Activated B cell treated with CpG ODN at 0.5 μM for 24 hours (primary cell): ENCODE measurements at regions of chr3 and their contacts with region 1.

Region 1: DNA sequence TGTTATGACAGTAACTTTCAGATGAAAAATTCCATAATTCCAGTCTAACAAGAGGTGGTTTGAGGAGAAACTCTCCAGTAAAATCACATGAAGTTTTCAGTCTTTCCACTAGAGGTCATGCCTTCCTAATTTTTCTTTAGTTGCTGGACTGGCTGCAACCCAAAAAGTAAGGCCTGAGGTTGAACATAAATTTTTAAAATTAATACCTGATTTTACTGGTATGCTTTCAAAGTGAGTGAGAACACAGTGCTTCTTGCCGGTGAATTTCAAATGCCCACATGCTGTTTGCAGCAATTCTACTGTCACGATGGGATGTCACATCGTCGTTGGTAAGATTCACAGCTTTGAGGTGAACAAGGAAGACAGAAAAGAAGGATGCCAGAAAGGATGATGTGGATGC is 89.0 kb upstream of the FGF12 start:
- DNase-seq: no peak
- ATAC-seq: no peak
- H3K4me3 Mint-ChIP-seq: no peak overlapping the region
- H3K27ac Mint-ChIP-seq: no peak overlapping the region
- H3K4me1 Mint-ChIP-seq: no peaks in the 10 kb centered on the region
- H3K27me3 Mint-ChIP-seq: peaks cover 3% of the 10 kb centered on the region
- CTCF ChIP-seq: no peak

Region 2: DNA sequence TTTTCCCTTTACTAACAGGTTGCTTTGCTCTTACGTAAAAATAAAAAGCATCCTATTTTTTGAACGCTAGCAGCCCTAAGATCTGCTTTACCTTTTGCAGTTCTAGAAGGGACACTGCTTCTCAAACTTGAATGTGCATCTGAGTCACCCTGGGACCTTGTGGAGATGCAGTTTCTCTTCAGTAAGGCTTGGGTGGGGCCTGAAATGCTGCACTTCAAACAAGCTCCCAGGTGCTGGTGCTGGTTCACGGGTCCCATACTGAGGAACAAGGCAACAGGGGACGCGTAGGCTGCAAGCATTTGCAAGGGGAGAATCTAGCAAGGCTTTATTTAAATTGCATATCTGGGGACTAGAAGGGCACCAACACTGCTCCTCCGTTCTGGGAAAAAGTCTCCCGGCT is 71.3 kb after region 1 on chr3:
- CTCF ChIA-PET with region 1: no interaction called
- POLR2A ChIA-PET with region 1: no interaction called
- intact Hi-C with region 1: loop called (anchors 2 kb)
- DNase-seq: no peak
- ATAC-seq: no peak
- H3K4me3 Mint-ChIP-seq: no peak overlapping the region
- H3K27ac Mint-ChIP-seq: no peak overlapping the region
- H3K4me1 Mint-ChIP-seq: no peaks in the 10 kb centered on the region
- H3K27me3 Mint-ChIP-seq: peaks cover 5% of the 10 kb centered on the region
- CTCF ChIP-seq: no peak

Region 3: GRCh38 chr3:192917404-192918274 is 101.3 kb after region 1 on chr3 and contains the start of gene MB21D2:
- CTCF ChIA-PET with region 1: no interaction called
- POLR2A ChIA-PET with region 1: no interaction called
- intact Hi-C with region 1: loop called (anchors 5 kb)
- DNase-seq: no peak
- ATAC-seq: peak; percentile 60
- H3K4me3 Mint-ChIP-seq: peak within 1 kb of the TSS; percentile 81
- H3K27ac Mint-ChIP-seq: no peak within 1 kb of the TSS
- H3K4me1 Mint-ChIP-seq: peaks cover 21% of the 10 kb centered on the region
- H3K27me3 Mint-ChIP-seq: peaks cover 65% of the 10 kb centered on the region
- CTCF ChIP-seq: no peak
- total RNA-seq, gene MB21D2: 0.09 and 0.15 TPM in 2 replicates

Region 4: GRCh38 chr3:193040836-193041672 is 224.7 kb after region 1 on chr3:
- CTCF ChIA-PET with region 1: interaction called, 17 read pairs
- POLR2A ChIA-PET with region 1: interaction called, 3 read pairs
- intact Hi-C with region 1: loop called (anchors 1 kb)
- DNase-seq: no peak
- ATAC-seq: no peak
- H3K4me3 Mint-ChIP-seq: no peak overlapping the region
- H3K27ac Mint-ChIP-seq: no peak overlapping the region
- H3K4me1 Mint-ChIP-seq: no peaks in the 10 kb centered on the region
- H3K27me3 Mint-ChIP-seq: no peaks in the 10 kb centered on the region
- CTCF ChIP-seq: no peak

Region 5: GRCh38 chr3:193572426-193572908 is 756.1 kb after region 1 on chr3:
- CTCF ChIA-PET with region 1: interaction called, 9 read pairs
- POLR2A ChIA-PET with region 1: no interaction called
- intact Hi-C with region 1: loop called (anchors 1 kb)
- DNase-seq: no peak
- ATAC-seq: peak; percentile 52
- H3K4me3 Mint-ChIP-seq: no peak overlapping the region
- H3K27ac Mint-ChIP-seq: no peak overlapping the region
- H3K4me1 Mint-ChIP-seq: no peaks in the 10 kb centered on the region
- H3K27me3 Mint-ChIP-seq: no peaks in the 10 kb centered on the region
- CTCF ChIP-seq: peak; percentile 54